Psoas muscle (tissue), 8 donors: ENCODE measurements at regions of chr12 and their contacts with region 1.

Region 1: DNA sequence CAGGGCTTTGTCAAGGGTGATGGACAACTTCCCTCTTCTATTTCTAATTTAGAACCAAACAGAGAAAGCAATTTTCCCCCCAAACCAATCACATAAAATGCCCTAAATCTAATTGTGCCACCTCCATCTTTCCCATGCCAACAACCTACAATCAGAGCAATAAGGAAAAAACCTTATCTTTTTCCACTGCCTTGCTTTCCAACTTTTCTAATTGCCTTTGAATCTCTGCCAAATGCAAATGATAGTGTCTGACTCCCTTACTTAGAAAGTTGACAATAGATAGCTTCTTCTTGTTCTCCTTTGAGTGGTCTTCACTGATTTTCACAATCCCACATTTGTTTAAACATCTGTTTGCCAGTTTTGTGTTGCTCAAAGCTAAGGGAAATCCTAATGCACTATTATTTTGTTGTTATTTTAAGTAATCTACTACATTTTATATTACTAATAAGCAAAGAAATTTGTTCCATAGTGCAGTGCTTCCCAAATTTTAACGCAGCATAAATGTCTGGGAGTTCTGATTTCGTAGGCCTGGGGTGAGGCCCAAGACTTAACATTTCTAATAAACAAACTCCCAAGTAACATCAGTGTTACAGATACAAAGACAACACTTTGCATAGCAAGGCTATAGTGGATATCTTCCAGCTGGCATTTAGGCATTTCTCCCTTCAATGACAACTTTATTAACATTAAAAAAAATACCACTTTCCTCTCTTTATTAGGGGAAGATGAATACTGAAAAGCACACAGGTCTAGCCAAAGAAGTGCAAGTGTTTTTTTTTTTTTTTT is 696.3 kb upstream of the USP15 start:
- DNase-seq: no peak
- ATAC-seq: no peak
- H3K4me3 ChIP-seq: no peak overlapping the region
- H3K27ac ChIP-seq: no peak overlapping the region
- H3K4me1 ChIP-seq: no peaks in the 10 kb centered on the region
- H3K27me3 ChIP-seq: no peaks in the 10 kb centered on the region
- CTCF ChIP-seq: no peak

Region 2: GRCh38 chr12:60014436-60014835 is 1549.4 kb before region 1 on chr12:
- intact Hi-C with region 1: loop called in 1 of 2 experiments (anchors 5 kb)
- DNase-seq: no peak
- ATAC-seq: no peak
- H3K4me3 ChIP-seq: no peak overlapping the region
- H3K27ac ChIP-seq: no peak overlapping the region
- H3K4me1 ChIP-seq: no peaks in the 10 kb centered on the region
- H3K27me3 ChIP-seq: no peaks in the 10 kb centered on the region
- CTCF ChIP-seq: no peak